ENCODE measurements at regions of chr11 and their contacts with region 1.

Region 1: GRCh38 chr11:10641177-10641911 is 52.2 kb downstream of the IRAG1 start:
- DNase-seq: no peak
- H3K4me3 Mint-ChIP-seq: no peak overlapping the region
- H3K27ac Mint-ChIP-seq: peak overlapping the region; percentile 21
- H3K4me1 Mint-ChIP-seq: no peaks in the 10 kb centered on the region
- H3K27me3 Mint-ChIP-seq: no peaks in the 10 kb centered on the region

Region 2: GRCh38 chr11:10623797-10624761 is 17.3 kb before region 1 on chr11:
- CTCF ChIA-PET with region 1: interaction called, 19 read pairs
- POLR2A ChIA-PET with region 1: no interaction called
- DNase-seq: no peak
- H3K4me3 Mint-ChIP-seq: no peak overlapping the region
- H3K27ac Mint-ChIP-seq: peak overlapping the region; percentile 95
- H3K4me1 Mint-ChIP-seq: peaks cover 23% of the 10 kb centered on the region
- H3K27me3 Mint-ChIP-seq: no peaks in the 10 kb centered on the region